Activated CD4-positive, alpha-beta T cell treated with anti-CD3 and anti-CD28 coated beads for 36 hours (primary cell): ENCODE measurements at regions of chr21 and their contacts with region 1.

Region 1: GRCh38 chr21:32403201-32403777 is 9.2 kb upstream of the EVA1C start:
- DNase-seq: peak; percentile 77
- ATAC-seq: peak; percentile 92
- H3K4me3 Mint-ChIP-seq: no peak overlapping the region
- H3K27ac Mint-ChIP-seq: no peak overlapping the region
- H3K4me1 Mint-ChIP-seq: peaks cover 7% of the 10 kb centered on the region
- H3K27me3 Mint-ChIP-seq: no peaks in the 10 kb centered on the region

Region 2: DNA sequence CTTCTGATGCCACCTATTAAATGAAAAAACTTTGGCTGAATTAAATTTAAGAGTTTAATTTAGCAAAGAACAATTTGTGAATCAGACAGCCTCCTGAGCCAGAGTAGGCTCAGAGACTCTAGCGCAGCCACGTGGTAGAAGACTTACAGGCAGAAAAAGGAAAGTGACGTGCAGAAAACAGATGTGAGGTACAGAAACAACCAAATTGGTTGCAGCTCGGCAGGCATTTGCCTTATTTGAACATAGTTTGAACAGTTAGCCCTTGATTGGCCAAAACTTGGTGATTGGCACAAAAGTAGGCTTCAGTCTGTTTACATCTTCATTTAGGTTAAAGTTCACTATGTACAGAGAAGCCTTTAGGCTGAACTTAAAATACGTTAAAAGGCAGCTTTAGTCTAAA is 159.1 kb after region 1 on chr21:
- CTCF ChIA-PET with region 1: interaction called, 67 read pairs
- POLR2A ChIA-PET with region 1: no interaction called
- intact Hi-C with region 1: loop called in 1 of 2 experiments (anchors 1 kb)
- DNase-seq: peak; percentile 52
- ATAC-seq: peak; percentile 53
- H3K4me3 Mint-ChIP-seq: no peak overlapping the region
- H3K27ac Mint-ChIP-seq: no peak overlapping the region
- H3K4me1 Mint-ChIP-seq: no peaks in the 10 kb centered on the region
- H3K27me3 Mint-ChIP-seq: no peaks in the 10 kb centered on the region

Region 3: GRCh38 chr21:32735524-32735923 is 332.2 kb after region 1 on chr21:
- CTCF ChIA-PET with region 1: no interaction called
- POLR2A ChIA-PET with region 1: no interaction called
- intact Hi-C with region 1: no loop called
- DNase-seq: peak; percentile 38
- ATAC-seq: peak; percentile 69
- H3K4me3 Mint-ChIP-seq: no peak overlapping the region
- H3K27ac Mint-ChIP-seq: peak overlapping the region; percentile 80
- H3K4me1 Mint-ChIP-seq: peaks cover 51% of the 10 kb centered on the region
- H3K27me3 Mint-ChIP-seq: no peaks in the 10 kb centered on the region